GM12878 (cell line): ENCODE measurements at regions of chr4 and their contacts with region 1.

Region 1: GRCh38 chr4:112031712-112032328 is 113.4 kb upstream of the FAM241A start:
- DNase-seq: peak; percentile 13
- ATAC-seq: peak; percentile 93
- H3K4me3 ChIP-seq: no peak overlapping the region
- H3K27ac ChIP-seq: no peak overlapping the region
- H3K4me1 ChIP-seq: no peaks in the 10 kb centered on the region
- H3K27me3 ChIP-seq: no peaks in the 10 kb centered on the region
- CTCF ChIP-seq: peak; percentile 53 to 81 (median 62)
- EP300 ChIP-seq: no peak
- POLR2A ChIP-seq: no peak
- RAD21 ChIP-seq: peak; percentile 86

Region 2: GRCh38 chr4:110869862-110870572 is 1161.8 kb before region 1 on chr4:
- CTCF ChIA-PET with region 1: no interaction called
- POLR2A ChIA-PET with region 1: no interaction called
- RAD21 ChIA-PET with region 1: no interaction called
- SMC1A ChIA-PET with region 1: no interaction called
- in situ Hi-C with region 1: loop called (anchors 25 kb)
- intact Hi-C with region 1: no loop called
- DNase-seq: peak; percentile 13
- ATAC-seq: peak; percentile 88
- H3K4me3 ChIP-seq: no peak overlapping the region
- H3K27ac ChIP-seq: no peak overlapping the region
- H3K4me1 ChIP-seq: peaks cover 6% of the 10 kb centered on the region; the same call in 1 of the 2 replicates
- H3K27me3 ChIP-seq: no peaks in the 10 kb centered on the region
- CTCF ChIP-seq: no peak
- EP300 ChIP-seq: no peak
- POLR2A ChIP-seq: no peak
- RAD21 ChIP-seq: no peak

Region 3: DNA sequence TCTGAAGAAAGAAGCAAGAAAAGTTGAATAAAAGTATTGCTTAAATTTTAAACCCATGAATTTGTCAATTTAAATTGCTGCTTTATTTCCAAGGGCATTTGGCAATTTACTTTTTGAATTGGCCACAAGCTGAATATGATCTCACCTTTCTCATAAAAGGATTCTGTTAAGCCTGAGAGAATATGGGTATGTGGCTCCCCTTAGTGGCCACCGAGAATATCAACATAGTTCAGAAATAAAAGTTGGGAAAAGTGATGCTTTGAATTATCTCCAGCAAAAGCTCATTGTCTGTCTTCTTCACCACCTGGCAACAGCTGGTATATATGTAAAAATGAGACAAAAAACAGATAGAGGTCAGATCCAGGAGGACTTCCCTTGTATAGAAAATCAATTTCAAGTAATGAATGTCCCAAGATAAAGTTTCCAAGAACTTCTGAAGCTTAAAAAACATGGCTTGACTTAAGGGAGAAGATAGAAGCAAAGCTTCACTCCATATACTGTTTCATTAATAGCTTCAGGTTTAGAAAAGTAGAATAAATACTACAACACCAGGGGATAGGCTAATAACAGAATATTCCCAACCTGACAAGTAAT is 177.2 kb before region 1 on chr4:
- CTCF ChIA-PET with region 1: interaction called, 53 read pairs
- POLR2A ChIA-PET with region 1: no interaction called
- RAD21 ChIA-PET with region 1: interaction called, 17 read pairs
- SMC1A ChIA-PET with region 1: interaction called, 11 read pairs
- in situ Hi-C with region 1: loop called (anchors 10 kb)
- intact Hi-C with region 1: loop called (anchors 2 kb)
- DNase-seq: no peak
- ATAC-seq: peak; percentile 83
- H3K4me3 ChIP-seq: no peak overlapping the region
- H3K27ac ChIP-seq: no peak overlapping the region
- H3K4me1 ChIP-seq: no peaks in the 10 kb centered on the region
- H3K27me3 ChIP-seq: no peaks in the 10 kb centered on the region
- CTCF ChIP-seq: peak; percentile 52 to 65 (median 60); a peak in 5 of 6 replicates
- EP300 ChIP-seq: no peak
- POLR2A ChIP-seq: no peak
- RAD21 ChIP-seq: peak; percentile 74

Region 4: DNA sequence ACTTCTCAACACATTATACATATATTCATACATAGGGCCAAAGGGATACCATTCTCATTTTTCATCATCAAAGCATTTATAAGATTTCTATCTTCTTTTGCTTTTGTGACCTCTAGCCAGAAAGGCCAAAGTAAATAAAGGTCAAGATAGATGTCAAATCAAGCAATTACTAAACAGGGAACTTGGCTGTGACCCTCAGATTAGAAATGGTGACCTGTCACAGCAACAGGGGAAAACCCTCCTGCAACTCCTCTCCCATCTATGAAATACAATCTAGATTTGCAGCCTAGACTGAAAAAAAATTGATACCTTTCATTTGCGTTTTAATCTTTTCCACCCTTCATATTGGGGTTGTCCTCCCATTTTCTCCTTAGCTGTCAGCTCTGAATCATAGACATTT is 112.2 kb before region 1 on chr4:
- CTCF ChIA-PET with region 1: no interaction called
- POLR2A ChIA-PET with region 1: no interaction called
- RAD21 ChIA-PET with region 1: no interaction called
- SMC1A ChIA-PET with region 1: no interaction called
- in situ Hi-C with region 1: no loop called
- intact Hi-C with region 1: no loop called
- DNase-seq: no peak
- ATAC-seq: no peak
- H3K4me3 ChIP-seq: no peak overlapping the region
- H3K27ac ChIP-seq: no peak overlapping the region
- H3K4me1 ChIP-seq: no peaks in the 10 kb centered on the region
- H3K27me3 ChIP-seq: no peaks in the 10 kb centered on the region; a peak in 1 of 4 replicates
- CTCF ChIP-seq: no peak
- EP300 ChIP-seq: no peak
- POLR2A ChIP-seq: no peak
- RAD21 ChIP-seq: no peak

Region 5: GRCh38 chr4:111937368-111937767 is 94.5 kb before region 1 on chr4:
- CTCF ChIA-PET with region 1: interaction called, 392 read pairs
- POLR2A ChIA-PET with region 1: no interaction called
- RAD21 ChIA-PET with region 1: interaction called, 214 read pairs
- SMC1A ChIA-PET with region 1: interaction called, 289 read pairs
- in situ Hi-C with region 1: no loop called
- intact Hi-C with region 1: no loop called
- DNase-seq: no peak
- ATAC-seq: peak; percentile 96
- H3K4me3 ChIP-seq: no peak overlapping the region
- H3K27ac ChIP-seq: no peak overlapping the region
- H3K4me1 ChIP-seq: no peaks in the 10 kb centered on the region
- H3K27me3 ChIP-seq: no peaks in the 10 kb centered on the region; a peak in 1 of 4 replicates
- CTCF ChIP-seq: peak; percentile 43 to 65 (median 49)
- EP300 ChIP-seq: no peak
- POLR2A ChIP-seq: no peak
- RAD21 ChIP-seq: peak; percentile 60

Region 6: GRCh38 chr4:111960241-111960667 is 71.6 kb before region 1 on chr4:
- CTCF ChIA-PET with region 1: interaction called, 19 read pairs
- POLR2A ChIA-PET with region 1: interaction called, 3 read pairs
- RAD21 ChIA-PET with region 1: interaction called, 8 read pairs
- SMC1A ChIA-PET with region 1: interaction called, 45 read pairs
- in situ Hi-C with region 1: no loop called
- intact Hi-C with region 1: loop called (anchors 1 kb)
- DNase-seq: peak; percentile 82
- ATAC-seq: peak; percentile 93
- H3K4me3 ChIP-seq: no peak overlapping the region
- H3K27ac ChIP-seq: no peak overlapping the region
- H3K4me1 ChIP-seq: no peaks in the 10 kb centered on the region
- H3K27me3 ChIP-seq: no peaks in the 10 kb centered on the region
- CTCF ChIP-seq: no peak
- EP300 ChIP-seq: peak; percentile 14 to 89; a peak in 3 of 4 replicates
- POLR2A ChIP-seq: no peak
- RAD21 ChIP-seq: no peak

Region 7: DNA sequence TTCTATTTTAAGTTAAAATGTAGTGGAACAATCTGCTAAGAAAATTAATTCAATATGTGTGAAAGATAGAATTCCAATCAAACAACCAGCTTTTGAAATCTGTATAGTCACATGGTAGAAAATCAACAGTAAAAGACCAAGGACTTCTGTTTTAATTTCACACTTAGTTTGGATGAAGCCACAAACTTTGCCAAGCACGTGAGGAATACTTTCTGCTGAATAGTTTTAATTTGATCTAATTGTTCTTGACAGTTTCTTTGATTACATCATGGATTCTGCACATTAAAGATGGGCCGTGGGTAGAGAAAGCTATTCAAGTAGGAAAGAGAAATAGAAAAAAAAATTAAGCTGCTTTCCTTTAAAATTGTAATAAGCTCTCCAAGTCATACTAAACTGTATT is 24.4 kb before region 1 on chr4:
- CTCF ChIA-PET with region 1: interaction called, 17 read pairs
- POLR2A ChIA-PET with region 1: no interaction called
- RAD21 ChIA-PET with region 1: interaction called, 3 read pairs
- SMC1A ChIA-PET with region 1: interaction called, 11 read pairs
- in situ Hi-C with region 1: no loop called
- intact Hi-C with region 1: no loop called
- DNase-seq: no peak
- ATAC-seq: no peak
- H3K4me3 ChIP-seq: no peak overlapping the region
- H3K27ac ChIP-seq: no peak overlapping the region
- H3K4me1 ChIP-seq: no peaks in the 10 kb centered on the region
- H3K27me3 ChIP-seq: no peaks in the 10 kb centered on the region
- CTCF ChIP-seq: no peak
- EP300 ChIP-seq: no peak
- POLR2A ChIP-seq: no peak
- RAD21 ChIP-seq: no peak